PC-3 (cell line): ENCODE measurements at regions of chr3 and their contacts with region 1.

Region 1: DNA sequence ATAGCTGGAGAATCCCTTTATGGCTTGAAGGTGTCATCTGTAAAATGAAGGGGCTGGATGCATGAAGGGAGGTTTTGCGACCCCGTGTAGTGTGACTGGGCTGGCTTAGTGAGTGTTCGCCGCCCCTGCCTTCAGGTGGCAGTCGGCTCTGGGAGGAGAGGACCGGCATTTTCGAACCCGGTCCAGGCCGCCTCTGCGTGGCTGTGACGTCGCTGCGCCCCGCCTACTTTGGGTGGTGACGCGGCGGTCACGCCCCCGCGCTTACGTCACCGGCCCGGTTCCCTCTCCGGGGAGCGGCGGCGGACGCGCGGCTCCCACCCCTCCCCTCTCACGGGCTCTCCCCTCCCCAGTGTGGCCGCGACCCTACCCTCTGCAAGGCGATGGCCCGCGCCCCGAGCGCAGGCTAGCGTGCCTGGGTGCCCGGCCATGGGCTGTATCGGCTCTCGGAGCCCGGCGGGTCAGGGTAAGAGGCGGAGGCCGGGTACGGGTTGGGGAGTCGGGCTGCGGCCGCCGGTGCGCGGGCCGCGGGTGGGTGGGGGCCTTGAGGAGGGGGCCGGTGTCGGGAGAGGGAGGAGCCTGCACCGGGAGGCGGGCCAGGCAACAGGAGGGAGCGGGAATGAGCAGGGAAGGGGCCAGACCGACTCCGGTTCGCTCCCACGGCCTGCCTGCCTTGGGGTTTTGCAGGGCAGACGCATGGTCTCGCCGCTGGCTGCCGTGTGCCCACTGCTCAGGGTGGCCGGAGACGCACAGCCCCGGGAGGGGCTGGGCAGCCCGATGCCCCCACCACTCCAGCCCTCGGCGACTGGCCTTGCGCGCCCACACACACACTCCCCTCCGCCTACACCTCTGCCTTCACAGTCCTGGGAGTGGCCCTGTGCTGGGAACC is 1.5 kb upstream of the FAM131A start:
- DNase-seq: peak; percentile 75
- ATAC-seq: peak; percentile 49
- H3K4me3 ChIP-seq: peak overlapping the region; percentile 71
- H3K27ac ChIP-seq: peak overlapping the region; percentile 95
- H3K4me1 ChIP-seq: peaks cover 62% of the 10 kb centered on the region
- H3K27me3 ChIP-seq: no peaks in the 10 kb centered on the region
- CTCF ChIP-seq: no peak

Region 2: DNA sequence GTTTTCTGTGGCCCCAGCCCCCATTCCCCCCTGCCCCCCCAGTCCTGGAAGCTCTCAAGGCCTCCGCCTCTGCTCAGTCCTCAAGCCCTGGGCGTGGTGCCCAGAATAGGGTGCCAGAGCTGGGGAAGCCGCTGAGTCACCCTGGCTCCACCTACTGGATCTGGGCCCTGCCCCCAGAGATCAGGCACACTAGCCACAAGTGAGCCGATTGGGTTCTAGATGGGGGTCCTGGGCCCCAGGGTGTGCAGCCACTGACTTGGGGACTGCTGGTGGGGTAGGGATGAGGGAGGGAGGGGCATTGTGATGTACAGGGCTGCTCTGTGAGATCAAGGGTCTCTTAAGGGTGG is 15.8 kb before region 1 on chr3:
- CTCF ChIA-PET with region 1: no interaction called
- POLR2A ChIA-PET with region 1: no interaction called
- intact Hi-C with region 1: loop called (anchors 1 kb)
- DNase-seq: peak; percentile 98
- ATAC-seq: peak; percentile 80
- H3K4me3 ChIP-seq: peak overlapping the region; percentile 52
- H3K27ac ChIP-seq: peak overlapping the region; percentile 88
- H3K4me1 ChIP-seq: peaks cover 40% of the 10 kb centered on the region
- H3K27me3 ChIP-seq: no peaks in the 10 kb centered on the region
- CTCF ChIP-seq: no peak

Region 3: DNA sequence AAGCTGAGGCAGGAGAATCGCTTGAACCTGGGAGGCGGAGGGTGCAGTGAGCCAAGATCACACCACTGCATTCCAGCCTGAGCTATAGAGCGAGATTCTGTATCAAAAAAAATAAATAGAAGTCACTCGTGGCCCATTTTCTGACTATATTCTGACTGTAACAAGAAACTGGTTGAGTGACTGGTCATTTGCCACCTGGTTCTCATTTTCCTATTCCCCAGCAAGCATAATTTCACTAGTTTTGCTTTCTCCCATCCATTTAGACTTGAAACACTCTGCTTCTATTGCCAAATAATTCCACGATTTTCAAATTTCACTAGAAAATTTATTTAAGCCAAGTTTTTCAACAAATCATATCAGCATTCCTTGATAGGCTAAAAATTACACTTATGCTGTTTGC is 776.3 kb after region 1 on chr3:
- CTCF ChIA-PET with region 1: no interaction called
- POLR2A ChIA-PET with region 1: no interaction called
- intact Hi-C with region 1: no loop called
- DNase-seq: no peak
- ATAC-seq: no peak
- H3K4me3 ChIP-seq: no peak overlapping the region
- H3K27ac ChIP-seq: no peak overlapping the region
- H3K4me1 ChIP-seq: no peaks in the 10 kb centered on the region
- H3K27me3 ChIP-seq: peaks cover 91% of the 10 kb centered on the region
- CTCF ChIP-seq: no peak